AG04449 (cell line): ENCODE measurements at regions of chr7 and their contacts with region 1.

Region 1: DNA sequence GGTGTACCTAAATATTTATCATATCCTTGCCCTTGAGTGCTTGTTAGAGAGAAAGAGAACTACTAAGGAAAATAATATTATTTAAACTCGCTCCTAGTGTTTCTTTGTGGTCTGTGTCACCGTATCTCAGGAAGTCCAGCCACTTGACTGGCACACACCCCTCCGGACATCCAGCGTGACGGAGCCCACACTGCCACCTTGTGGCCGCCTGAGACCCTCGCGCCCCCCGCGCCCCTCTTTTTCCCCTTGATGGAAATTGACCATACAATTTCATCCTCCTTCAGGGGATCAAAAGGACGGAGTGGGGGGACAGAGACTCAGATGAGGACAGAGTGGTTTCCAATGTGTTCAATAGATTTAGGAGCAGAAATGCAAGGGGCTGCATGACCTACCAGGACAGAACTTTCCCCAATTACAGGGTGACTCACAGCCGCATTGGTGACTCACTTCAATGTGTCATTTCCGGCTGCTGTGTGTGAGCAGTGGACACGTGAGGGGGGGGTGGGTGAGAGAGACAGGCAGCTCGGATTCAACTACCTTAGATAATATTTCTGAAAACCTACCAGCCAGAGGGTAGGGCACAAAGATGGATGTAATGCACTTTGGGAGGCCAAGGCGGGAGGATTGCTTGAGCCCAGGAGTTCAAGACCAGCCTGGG is 11.4 kb downstream of the SERPINE1 start:
- DNase-seq: peak; percentile 87
- H3K4me3 ChIP-seq: no peak overlapping the region
- CTCF ChIP-seq: peak; percentile 70

Region 2: GRCh38 chr7:100991631-100992030 is 146.7 kb before region 1 on chr7:
- CTCF ChIA-PET with region 1: no interaction called
- POLR2A ChIA-PET with region 1: no interaction called
- DNase-seq: no peak
- H3K4me3 ChIP-seq: no peak overlapping the region
- CTCF ChIP-seq: no peak

Region 3: DNA sequence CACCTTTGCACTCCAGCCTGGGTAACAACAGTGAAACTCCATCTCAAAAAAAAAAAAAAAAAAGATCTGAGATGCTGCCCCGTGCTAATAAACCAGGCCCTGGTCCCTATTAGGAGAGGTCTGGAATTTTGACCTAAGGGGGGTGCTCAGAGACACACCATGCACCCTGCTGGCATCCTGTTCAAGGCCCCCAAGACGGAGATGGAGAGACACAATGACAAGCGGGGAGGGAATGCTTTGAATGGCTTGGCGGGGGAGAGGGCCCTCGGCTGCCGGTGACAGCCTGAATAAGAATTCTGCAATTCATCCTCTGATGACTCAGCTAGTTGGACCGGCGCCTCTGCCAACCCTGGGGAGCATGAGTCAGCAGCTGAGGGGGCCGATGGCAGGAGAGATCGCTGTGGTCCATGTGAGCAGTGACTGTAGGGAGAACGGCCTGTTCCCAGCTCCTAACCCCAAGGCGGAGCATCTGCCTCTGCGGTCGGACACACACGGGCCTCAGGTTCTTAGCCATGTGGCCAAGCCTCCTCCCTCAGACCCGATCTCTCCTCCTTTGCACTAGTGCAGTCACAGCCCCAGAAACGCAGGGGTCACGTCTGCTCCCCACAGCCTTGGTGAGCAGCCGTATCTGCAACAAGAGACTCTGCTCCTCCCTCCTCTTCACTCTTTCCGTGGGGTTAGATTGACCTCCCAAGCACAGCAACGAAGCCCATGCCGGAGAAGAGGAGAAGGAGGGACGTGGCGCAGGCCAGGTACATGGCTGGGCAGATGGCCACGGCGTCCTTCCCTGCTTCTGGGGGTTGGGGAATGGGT is 38.2 kb before region 1 on chr7:
- CTCF ChIA-PET with region 1: interaction called, 55 read pairs
- POLR2A ChIA-PET with region 1: interaction called, 30 read pairs
- DNase-seq: peak; percentile 93
- H3K4me3 ChIP-seq: peak overlapping the region; percentile 23
- CTCF ChIP-seq: no peak

Region 4: DNA sequence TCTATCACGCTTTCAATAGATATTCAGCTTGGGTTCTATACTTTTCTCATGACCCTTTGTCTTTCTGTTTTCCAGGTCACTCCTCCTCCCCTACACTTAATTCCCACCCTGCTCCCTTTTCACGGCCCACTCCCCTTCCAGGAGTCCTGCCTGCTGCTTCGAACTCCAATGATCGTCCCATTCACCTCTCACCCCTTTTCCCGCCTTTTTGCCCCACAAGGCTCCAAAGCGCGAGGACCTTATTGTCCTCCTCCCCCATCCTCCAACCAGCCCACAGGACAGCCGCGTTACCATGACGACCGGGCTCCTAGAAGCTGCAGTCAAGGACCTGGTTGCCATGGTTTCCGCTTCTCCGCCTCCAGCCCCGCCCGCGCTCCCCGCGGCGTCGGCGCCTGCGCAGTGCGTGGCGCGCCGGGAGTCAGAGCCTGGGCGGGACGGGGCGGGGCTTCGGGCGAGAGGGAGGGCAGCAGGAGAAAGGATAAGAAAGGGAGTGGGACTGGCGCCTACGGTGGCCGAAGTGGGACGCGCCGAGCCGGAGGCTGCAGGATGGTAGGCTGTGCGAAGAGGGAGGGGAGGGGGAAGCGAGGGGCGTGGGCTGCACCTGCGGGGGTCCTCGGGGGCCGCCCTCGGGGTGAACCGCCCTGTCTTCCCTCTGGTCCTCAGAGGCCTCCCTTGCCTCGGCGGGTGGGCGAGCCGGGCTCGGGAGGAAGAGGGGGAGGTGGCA is 15.8 kb after region 1 on chr7 and contains the start of gene AP1S1:
- CTCF ChIA-PET with region 1: interaction called, 58 read pairs
- POLR2A ChIA-PET with region 1: interaction called, 6 read pairs
- DNase-seq: no peak
- H3K4me3 ChIP-seq: peak within 1 kb of the TSS; percentile 83
- CTCF ChIP-seq: no peak

Region 5: DNA sequence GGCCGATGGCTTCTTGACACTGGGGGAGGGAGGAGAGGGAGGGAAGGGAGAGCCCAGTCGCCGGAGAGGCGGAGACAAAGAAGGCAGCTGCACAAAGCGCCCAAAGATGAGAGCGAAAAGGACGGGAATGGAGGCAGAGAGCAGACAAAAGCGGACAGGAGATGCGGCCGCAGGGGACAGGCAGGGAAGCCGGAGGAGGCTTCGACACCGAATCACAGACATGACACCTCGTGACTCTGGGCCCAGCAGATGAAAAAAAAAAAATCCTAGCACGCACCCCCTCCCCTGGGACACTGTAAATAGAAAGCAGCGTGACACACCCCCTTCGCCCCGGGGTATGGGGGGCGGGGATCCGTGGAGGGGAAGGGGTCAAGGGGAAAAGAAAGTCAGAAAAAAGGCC is 40.8 kb after region 1 on chr7:
- CTCF ChIA-PET with region 1: interaction called, 48 read pairs
- POLR2A ChIA-PET with region 1: no interaction called
- DNase-seq: no peak
- H3K4me3 ChIP-seq: no peak overlapping the region
- CTCF ChIP-seq: no peak

Region 6: DNA sequence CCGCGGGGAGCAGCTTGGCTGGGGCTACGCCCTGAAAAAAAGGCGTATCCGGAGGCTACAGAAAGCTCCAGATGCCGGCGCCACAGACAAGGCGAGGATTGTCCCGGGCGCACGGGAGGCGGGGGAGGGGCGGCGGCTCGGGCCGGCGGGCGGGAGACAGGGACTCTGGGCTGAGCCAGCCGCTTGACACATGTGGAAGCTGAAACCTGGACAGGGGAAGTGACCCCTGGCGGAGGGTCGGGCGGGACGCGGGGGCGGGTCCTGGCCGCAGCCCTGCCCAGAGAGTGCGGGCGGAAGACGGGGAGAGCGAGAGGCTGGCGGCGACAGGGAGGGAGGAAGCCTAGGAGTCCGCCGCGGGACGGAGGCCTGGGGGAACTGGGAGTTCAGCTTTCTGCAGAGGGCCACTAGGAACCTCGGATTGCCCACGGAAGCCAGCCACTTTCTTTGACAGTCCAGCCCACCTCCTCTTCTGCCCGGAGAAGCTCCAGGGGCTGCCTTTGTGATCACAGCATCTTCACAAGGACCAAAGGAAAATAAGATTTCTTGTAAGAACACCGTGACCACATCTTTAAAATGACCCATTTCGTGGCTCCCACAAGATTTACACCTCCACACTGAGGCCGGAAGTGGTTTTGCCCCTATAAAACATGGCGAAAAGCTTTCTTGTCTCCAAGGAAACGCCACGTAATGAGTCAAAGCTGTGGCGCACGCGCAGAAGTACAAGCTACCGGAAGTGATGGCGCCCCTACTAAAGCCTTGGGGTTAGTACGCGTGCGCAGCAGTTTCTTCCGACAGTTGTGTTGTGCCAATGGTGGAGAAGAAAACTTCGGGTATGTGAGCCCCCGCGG is 79.3 kb after region 1 on chr7 and contains the starts of genes PLOD3 and ZNHIT1:
- CTCF ChIA-PET with region 1: interaction called, 34 read pairs
- POLR2A ChIA-PET with region 1: interaction called, 3 read pairs
- DNase-seq: peak; percentile 85
- H3K4me3 ChIP-seq: peak within 1 kb of the TSS; percentile 91
- CTCF ChIP-seq: peak; percentile 13

Region 7: DNA sequence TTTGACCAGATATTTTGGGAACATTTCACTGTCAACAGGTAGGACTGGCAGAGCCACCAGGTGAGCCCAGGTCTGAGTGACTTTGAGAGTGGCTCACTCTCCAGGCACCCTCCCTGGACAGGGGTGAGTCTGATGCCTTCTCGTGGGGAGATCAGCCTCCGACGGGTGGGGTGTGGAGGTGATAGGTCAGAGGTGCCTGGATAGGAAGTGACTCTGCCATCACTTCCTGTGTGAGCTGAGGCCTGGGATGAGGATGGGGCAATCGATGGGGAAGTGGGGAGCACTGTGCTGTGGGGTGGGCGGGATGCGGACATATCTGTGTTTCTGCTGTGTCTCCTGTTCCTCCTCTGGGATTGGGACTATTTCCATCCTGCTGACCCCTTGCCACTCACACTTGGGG is 148.7 kb after region 1 on chr7:
- CTCF ChIA-PET with region 1: interaction called, 283 read pairs
- POLR2A ChIA-PET with region 1: interaction called, 3 read pairs
- DNase-seq: no peak
- H3K4me3 ChIP-seq: no peak overlapping the region
- CTCF ChIP-seq: no peak